Endothelial cell of umbilical vein (primary cell): ENCODE measurements at regions of chr4 and their contacts with region 1.

Region 1: GRCh38 chr4:8192748-8193738 is 6.0 kb upstream of the SH3TC1 start:
- DNase-seq: peak; percentile 79
- H3K4me3 ChIP-seq: no peak overlapping the region
- H3K27ac ChIP-seq: no peak overlapping the region
- H3K4me1 ChIP-seq: peaks cover 62% of the 10 kb centered on the region
- H3K27me3 ChIP-seq: no peaks in the 10 kb centered on the region
- CTCF ChIP-seq: peak; percentile 9 to 18
- POLR2A ChIP-seq: no peak

Region 2: DNA sequence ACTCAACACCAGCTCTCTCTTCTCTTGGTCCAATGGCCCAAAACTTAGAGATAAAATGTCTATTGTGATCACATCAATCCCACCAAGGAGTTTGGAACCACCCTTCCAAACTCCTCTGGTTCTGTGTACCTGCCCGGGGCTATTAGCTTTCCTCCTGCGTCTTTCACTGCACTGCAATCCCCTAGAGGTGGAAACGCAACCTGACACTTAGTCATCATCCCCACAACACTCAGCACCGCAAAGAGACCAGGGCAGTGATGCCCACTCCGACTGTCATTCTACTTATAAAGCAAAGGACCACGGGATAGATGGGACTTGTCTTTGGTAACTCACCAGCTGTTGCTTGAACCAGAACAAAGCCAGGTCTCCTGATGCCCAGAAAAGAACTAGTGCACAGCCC is 275.4 kb before region 1 on chr4:
- CTCF ChIA-PET with region 1: no interaction called
- POLR2A ChIA-PET with region 1: no interaction called
- dilution Hi-C with region 1: no loop called
- intact Hi-C with region 1: loop called (anchors 5 kb)
- DNase-seq: no peak
- H3K4me3 ChIP-seq: no peak overlapping the region
- H3K27ac ChIP-seq: peak overlapping the region; percentile 73
- H3K4me1 ChIP-seq: peaks cover 29% of the 10 kb centered on the region
- H3K27me3 ChIP-seq: no peaks in the 10 kb centered on the region
- CTCF ChIP-seq: peak in 1 of 2 donors; percentile 8
- POLR2A ChIP-seq: no peak

Region 3: DNA sequence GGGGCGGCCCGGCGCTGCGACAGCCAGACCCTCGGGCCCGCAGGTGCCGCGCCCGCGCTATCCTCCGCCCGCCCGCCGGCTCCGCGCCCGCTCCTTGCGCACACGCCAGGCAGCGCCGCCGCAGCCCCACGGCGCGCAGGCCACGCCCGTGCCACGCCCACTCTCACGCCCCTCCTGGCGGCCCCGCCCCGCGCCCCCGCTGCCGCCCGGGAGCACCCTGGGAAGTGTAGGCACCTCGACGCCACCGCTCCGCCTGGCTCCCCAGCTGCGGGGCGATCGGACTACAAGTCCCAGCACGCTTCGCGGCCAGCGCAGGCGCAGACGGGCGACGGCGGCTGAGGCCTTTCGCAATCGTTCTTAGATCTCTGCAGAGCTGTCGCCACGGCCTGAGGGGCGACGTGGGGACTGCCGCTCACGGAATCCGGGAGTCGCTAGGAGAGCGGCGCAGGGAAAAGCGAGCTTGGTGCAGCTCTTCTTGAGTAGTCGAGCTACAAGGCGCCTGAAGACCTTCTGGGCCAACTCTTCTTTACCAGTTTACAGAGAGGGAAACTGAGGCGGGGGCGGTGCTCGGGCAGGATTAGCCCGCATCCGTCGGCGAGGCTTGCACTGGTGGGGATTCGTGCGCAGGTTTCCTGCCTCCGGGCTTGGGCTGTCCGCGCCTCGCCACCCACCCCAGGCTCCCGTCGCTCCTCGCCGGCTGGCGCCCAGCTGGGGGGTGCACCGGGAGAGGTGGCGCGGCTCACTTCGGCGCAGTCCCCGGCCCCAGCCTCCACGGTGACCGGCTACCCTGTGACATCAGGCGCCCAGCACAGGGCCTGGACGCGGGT is 34.1 kb before region 1 on chr4 and contains the start of gene ABLIM2:
- CTCF ChIA-PET with region 1: interaction called, 3 read pairs
- POLR2A ChIA-PET with region 1: no interaction called
- dilution Hi-C with region 1: no loop called
- intact Hi-C with region 1: loop called (anchors 2 kb)
- DNase-seq: peak; percentile 97
- H3K4me3 ChIP-seq: peak within 1 kb of the TSS; percentile 21 to 70 (median 51)
- H3K27ac ChIP-seq: no peak within 1 kb of the TSS
- H3K4me1 ChIP-seq: peaks cover 11% of the 10 kb centered on the region
- H3K27me3 ChIP-seq: peaks cover 16 to 17% of the 10 kb centered on the region in 2 experiments
- CTCF ChIP-seq: no peak
- POLR2A ChIP-seq: peak; percentile 59
- total RNA-seq, gene ABLIM2: 0.30 and 0.66 TPM in 2 replicates

Region 4: DNA sequence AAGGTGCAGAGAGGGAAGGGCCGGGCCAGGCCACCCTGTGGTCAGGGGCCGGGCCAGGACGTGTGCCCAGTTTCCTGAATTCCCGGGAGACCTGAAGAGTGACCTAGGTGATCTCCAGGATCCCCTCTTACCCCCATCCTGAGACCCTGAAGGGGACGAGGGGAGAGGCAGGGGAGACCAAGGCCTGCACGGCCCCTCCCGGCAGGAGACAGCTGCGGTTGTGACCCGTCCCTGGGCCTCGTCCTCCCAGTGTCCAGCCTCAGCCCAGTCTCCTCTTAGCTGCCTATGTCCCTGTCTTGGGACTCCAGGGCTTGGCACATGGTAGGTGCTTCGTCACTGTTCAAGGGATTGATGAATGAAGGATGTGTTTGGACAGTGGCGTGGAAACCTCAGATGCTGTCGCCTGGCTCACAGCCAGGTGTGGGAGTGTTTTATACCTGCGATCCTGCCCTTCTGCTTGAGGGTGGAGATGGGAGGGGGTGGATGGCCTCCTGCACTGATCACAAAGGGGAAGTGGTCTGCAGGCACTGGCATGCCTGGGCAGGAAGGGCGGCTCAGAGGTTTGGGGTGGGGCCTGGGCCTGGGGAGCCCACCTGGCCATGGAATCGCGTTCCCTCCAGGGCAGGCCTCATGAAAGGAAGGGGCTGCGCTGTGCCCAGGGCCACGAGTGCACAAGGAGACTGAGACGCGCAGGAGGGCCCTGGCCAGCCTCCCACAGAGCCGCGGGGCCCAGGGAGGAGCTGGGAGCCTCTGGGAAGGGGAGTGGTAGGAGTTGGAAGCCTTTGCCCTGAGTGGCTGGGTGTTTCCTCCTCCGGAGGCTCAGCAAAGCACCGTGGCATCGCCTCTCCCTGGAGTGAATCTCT is 12.9 kb after region 1 on chr4:
- CTCF ChIA-PET with region 1: interaction called, 8 read pairs
- POLR2A ChIA-PET with region 1: no interaction called
- dilution Hi-C with region 1: no loop called
- intact Hi-C with region 1: loop called (anchors 2 kb)
- DNase-seq: no peak
- H3K4me3 ChIP-seq: no peak overlapping the region
- H3K27ac ChIP-seq: peak overlapping the region; percentile 22
- H3K4me1 ChIP-seq: peaks cover 39% of the 10 kb centered on the region
- H3K27me3 ChIP-seq: no peaks in the 10 kb centered on the region
- CTCF ChIP-seq: no peak
- POLR2A ChIP-seq: no peak